ENCODE measurements at regions of chr9 and their contacts with region 1.

Region 1: GRCh38 chr9:95048225-95049087 is 269.1 kb downstream of the FANCC start:
- DNase-seq: peak; percentile 76 to 82
- H3K4me3 ChIP-seq: peak overlapping the region; percentile 62
- H3K4me3 Mint-ChIP-seq: peak overlapping the region; percentile 91
- H3K27ac Mint-ChIP-seq: peak overlapping the region; percentile 82
- H3K4me1 ChIP-seq: peaks cover 19% of the 10 kb centered on the region
- H3K4me1 Mint-ChIP-seq: peaks cover 22% of the 10 kb centered on the region
- H3K27me3 ChIP-seq: no peaks in the 10 kb centered on the region
- H3K27me3 Mint-ChIP-seq: no peaks in the 10 kb centered on the region
- CTCF ChIP-seq: no peak

Region 2: DNA sequence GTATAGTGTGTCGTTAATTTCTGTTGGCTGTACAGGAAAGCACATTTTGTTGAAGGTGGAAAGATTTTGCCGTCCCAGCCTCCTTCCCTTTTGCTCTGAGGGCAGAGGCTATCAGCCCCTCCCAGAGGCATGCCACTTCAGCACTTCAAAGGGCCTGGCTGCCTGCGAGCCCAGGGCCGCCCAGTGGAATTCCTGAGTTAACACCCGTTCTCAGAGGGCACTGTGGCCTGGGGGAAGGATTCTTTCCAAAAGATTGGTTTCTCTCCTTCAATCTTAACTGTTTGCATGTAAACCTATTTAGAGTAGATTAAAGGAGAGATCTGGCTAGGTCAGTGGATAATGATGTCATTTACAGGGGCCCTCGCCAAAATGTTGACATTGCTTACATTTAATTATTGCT is 30.5 kb after region 1 on chr9:
- CTCF ChIA-PET with region 1: interaction called, 3 read pairs
- POLR2A ChIA-PET with region 1: interaction called, 3 read pairs
- intact Hi-C with region 1: loop called (anchors 2 kb)
- DNase-seq: peak; percentile 75 to 79
- H3K4me3 ChIP-seq: no peak overlapping the region
- H3K4me3 Mint-ChIP-seq: peak overlapping the region; percentile 14
- H3K27ac Mint-ChIP-seq: peak overlapping the region; percentile 53
- H3K4me1 ChIP-seq: peaks cover 39% of the 10 kb centered on the region
- H3K4me1 Mint-ChIP-seq: peaks cover 43% of the 10 kb centered on the region
- H3K27me3 ChIP-seq: no peaks in the 10 kb centered on the region
- H3K27me3 Mint-ChIP-seq: no peaks in the 10 kb centered on the region
- CTCF ChIP-seq: no peak

Region 3: DNA sequence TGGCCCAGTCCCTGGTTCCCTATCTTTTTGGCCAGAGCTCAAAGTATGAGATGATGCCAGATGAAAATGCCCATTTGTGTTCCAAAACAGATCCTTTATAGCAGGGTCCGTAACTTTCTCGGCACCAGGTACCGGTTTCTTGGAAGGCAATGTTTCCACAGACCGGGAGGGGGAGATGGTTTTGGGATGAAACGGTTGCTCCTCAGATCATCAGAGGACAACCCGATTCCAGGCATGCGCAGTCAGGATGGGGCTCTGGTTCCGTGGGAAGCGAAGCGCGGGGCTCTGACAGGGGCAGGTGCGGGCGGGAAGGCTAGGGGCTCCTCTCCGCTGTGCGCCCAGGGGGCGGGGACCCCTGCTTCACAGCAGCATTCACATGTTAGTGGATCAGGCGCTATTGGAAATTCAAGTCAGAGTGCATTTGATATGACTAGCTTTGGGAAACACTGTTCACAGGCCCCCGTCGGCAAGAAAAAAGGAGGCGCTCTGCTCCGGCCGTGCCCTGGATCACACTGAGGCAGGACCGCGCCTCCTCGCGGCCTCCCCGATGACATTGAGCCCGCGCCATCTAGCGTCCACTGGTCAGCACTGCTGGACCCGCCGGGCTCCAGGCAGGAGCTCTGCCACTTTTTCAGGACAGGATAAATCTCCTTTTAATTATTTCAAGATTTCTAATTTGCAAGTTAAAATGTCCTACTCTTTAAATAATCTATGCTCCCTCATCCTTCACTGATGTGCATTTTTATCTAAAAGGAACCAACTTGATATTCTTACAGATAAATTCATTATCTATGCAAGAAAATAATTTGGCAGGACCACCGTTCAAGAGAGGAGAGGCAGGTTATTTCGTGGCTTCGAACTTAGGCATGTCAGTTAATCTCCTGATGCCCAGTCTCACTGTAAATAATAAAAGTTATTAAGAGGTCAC is 79.1 kb after region 1 on chr9:
- CTCF ChIA-PET with region 1: interaction called, 3 read pairs
- POLR2A ChIA-PET with region 1: no interaction called
- intact Hi-C with region 1: loop called (anchors 5 kb)
- DNase-seq: peak; percentile 67 to 77
- H3K4me3 ChIP-seq: no peak overlapping the region
- H3K4me3 Mint-ChIP-seq: no peak overlapping the region
- H3K27ac Mint-ChIP-seq: no peak overlapping the region
- H3K4me1 ChIP-seq: no peaks in the 10 kb centered on the region
- H3K4me1 Mint-ChIP-seq: peaks cover 13% of the 10 kb centered on the region
- H3K27me3 ChIP-seq: no peaks in the 10 kb centered on the region
- H3K27me3 Mint-ChIP-seq: no peaks in the 10 kb centered on the region
- CTCF ChIP-seq: peak; percentile 71 to 95